Dorsolateral prefrontal cortex (tissue), 120 donors: ENCODE measurements at regions of chr20 and their contacts with region 1.

Region 1: GRCh38 chr20:5871459-5872410 is 78.6 kb downstream of the TRMT6 start:
- DNase-seq: peak in 1 of 10 donors; percentile 42
- H3K4me3 ChIP-seq: no peak overlapping the region
- H3K27ac ChIP-seq: peak overlapping the region in 40 of 59 donors; percentile 11 to 81 (median 50)
- H3K27me3 ChIP-seq: no peaks in the 10 kb centered on the region
- CTCF ChIP-seq: no peak

Region 2: DNA sequence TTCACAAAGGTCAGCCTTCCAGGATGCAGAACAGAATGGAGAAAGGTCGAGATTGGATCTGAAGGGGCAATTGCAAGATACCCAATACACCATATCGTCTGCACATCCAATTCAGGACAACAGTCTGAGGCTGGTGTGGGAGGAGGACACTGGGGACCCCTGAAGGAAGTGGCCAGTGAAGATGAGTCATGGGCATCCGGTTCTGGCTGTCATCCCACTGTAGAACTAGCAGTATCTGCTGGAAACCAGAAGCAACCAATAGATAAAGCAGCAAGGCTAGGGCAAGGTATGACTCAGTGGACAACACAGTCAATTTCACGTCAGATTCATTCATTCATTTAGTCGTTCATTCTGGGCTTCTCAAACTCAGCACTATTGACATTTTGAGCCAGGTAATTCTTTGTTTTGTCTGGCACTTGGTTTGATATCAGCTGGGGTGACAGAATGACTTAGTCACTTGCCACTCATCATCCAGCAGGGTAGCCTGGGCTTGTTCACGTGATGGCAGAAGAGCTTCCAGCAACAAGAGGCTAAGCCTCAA is 151.8 kb before region 1 on chr20:
- intact Hi-C with region 1: no loop called
- DNase-seq: no peak
- H3K4me3 ChIP-seq: no peak overlapping the region
- H3K27ac ChIP-seq: peak overlapping the region in 1 of 59 donors; percentile 84
- H3K27me3 ChIP-seq: peaks cover 0 to 32% (median 0%) of the 10 kb centered on the region in 45 donors
- CTCF ChIP-seq: no peak

Region 3: DNA sequence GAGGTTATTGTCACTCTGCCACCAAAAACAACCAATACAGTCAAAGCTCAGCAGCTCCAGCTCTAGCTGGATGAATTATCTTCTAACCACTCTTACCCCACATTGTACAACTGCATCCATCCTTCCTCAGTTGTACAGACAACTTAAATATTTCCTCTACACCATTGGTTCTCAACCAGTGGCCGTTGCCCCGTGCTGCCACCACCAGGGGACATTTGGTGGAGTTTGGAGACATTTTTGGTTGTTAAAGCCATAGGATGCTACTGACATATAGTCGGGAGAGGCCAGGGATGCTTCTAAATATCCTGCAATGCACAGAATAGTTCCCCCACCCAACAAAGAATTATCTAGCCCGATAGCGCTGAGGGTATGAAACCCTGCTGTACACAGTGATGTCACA is 62.2 kb before region 1 on chr20:
- intact Hi-C with region 1: loop called in 1 of 2 experiments (anchors 2 kb)
- DNase-seq: no peak
- H3K4me3 ChIP-seq: no peak overlapping the region
- H3K27ac ChIP-seq: peak overlapping the region in 35 of 59 donors; percentile 5 to 75 (median 48)
- H3K27me3 ChIP-seq: no peaks in the 10 kb centered on the region
- CTCF ChIP-seq: no peak

Region 4: DNA sequence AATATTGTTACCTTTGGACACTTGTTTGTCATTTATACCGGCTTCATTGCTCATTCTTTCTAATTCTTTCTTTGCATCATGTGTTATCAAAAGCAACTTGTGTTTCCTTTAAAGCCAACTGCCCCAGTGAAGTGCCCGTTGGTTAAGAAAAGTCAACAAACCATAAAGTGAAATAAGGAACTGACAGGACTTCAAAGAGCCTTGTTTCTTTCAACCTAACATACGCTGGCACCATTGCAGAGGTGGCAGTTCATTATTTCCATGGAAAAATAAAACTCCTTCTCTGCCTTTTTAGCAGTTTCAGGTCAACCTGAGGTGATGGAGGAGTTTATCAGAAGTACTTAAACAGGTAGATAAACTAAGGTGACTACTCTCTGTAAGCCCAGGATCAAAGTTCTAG is 222.3 kb after region 1 on chr20:
- intact Hi-C with region 1: no loop called
- DNase-seq: no peak
- H3K4me3 ChIP-seq: no peak overlapping the region
- H3K27ac ChIP-seq: no peak overlapping the region
- H3K27me3 ChIP-seq: peaks cover 0 to 2% (median 0%) of the 10 kb centered on the region in 45 donors
- CTCF ChIP-seq: no peak